Heart left ventricle (tissue), 16 donors: ENCODE measurements at regions of chr2 and their contacts with region 1.

Region 1: DNA sequence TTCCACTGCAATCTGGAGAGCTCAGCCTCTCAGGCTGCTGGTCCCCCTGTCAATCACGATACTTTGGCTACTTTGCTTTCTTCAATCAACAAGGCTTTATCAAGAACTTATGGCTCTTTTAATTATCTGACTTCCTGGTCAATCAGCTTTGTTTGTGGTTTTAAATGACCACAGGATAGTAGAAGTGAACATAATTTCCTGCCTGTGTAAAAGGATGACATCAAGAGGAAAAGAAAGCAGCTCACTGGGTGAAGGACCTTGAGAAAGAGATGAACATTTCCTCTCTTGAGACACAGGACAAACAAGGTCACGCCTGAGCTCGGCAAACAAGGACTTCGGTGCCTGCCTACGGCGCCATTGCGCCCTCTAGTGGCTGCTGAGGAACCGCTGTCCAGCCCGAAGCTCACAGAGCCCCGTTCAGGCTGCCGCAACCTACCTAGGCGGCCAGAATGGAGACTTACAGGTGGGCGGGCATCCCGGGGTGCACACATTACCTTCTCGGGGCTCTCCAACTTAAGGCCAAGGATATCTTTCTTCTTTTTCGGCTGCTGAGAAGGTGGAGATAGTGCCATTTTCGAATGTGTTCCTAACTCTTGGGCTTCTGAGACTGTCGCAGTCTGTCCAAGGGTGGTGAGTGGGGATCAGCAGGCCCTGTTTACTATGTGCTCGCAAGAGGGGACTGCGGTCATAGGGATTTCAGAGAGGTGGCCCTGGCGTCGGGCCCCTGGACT is 54.0 kb downstream of the IL1RL2 start:
- DNase-seq: peak; percentile 91 to 95 (median 92)
- ATAC-seq: peak; percentile 89 to 96 (median 94)
- H3K4me3 ChIP-seq: peak overlapping the region in 6 of 12 donors; percentile 5 to 33 (median 16)
- H3K27ac ChIP-seq: peak overlapping the region; percentile 58 to 88 (median 79)
- H3K4me1 ChIP-seq: peaks cover 0 to 29% (median 11%) of the 10 kb centered on the region in 12 donors
- H3K27me3 ChIP-seq: peaks cover 0 to 2% (median 0%) of the 10 kb centered on the region in 9 donors
- CTCF ChIP-seq: peak; percentile 97 to 100 (median 99)
- POLR2A ChIP-seq: peak in 1 of 2 donors; percentile 23

Region 2: DNA sequence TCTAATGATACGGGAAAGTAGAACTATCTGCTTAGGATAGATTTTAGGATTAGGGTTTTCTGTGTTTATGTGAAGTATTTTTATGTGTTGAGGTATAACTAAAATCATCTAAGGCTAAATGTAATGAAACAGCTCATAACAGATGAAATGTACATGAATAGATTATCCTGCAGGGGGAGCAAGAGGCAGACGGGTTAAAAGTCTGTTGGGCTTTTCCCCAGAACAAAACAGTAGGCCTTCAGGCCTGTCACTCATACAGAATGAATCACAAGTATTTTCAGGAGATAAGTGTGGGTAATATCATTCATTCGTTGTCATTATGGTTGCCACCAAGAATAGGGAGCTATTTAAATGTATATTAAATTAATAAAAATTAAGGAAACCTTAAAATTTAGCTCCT is 356.9 kb before region 1 on chr2:
- intact Hi-C with region 1: loop called in 7 of 10 experiments (anchors 5 to 10 kb)
- DNase-seq: no peak
- ATAC-seq: peak in 3 of 4 donors; percentile 65 to 79 (median 77)
- H3K4me3 ChIP-seq: no peak overlapping the region
- H3K27ac ChIP-seq: peak overlapping the region in 1 of 12 donors; percentile 25
- H3K4me1 ChIP-seq: peaks cover 0 to 35% (median 17%) of the 10 kb centered on the region in 12 donors
- H3K27me3 ChIP-seq: no peaks in the 10 kb centered on the region
- CTCF ChIP-seq: peak; percentile 33 to 68 (median 54)
- POLR2A ChIP-seq: no peak

Region 3: DNA sequence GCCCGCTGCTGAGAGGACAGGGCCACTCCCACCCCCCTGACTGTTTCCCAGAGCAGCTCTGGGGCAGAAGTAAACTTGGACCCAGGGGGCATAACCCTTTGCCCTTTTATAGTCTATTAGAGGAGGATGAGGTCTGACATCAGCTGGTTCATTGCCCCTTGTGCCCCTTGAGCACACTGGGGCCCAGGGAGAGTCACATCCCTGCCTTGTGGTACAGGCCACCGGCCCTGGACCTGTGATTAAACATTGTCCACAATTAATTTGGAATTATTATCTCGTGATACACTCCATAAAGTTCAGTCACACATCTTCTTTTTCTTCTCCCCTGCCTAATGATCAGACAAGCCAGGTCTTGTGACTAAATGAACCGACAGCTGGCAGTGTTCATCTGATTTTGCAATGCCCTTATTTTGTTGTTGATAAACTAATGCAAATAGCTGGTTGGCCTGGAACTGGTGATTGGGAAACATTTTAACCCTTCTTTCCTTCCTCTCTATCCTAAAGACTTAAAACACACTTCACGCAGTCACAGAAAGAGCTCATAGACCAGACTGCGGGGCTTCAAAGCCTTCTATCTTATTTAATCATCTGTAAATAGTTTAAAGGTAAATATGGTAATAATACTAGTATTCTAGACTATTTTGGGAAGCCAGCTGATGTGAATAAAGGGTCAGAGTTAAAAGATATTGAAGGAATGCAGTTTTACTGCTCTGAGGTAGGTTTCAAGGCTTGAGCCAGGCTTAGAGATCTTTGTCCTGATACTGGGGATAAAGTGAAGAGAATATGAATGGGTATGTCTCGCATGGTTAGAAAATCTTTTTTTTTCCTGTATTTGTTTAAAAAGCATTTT is 84.9 kb before region 1 on chr2:
- intact Hi-C with region 1: no loop called
- DNase-seq: no peak
- ATAC-seq: peak in 2 of 4 donors; percentile 16 to 39
- H3K4me3 ChIP-seq: no peak overlapping the region
- H3K27ac ChIP-seq: peak overlapping the region in 3 of 12 donors; percentile 53 to 68 (median 62)
- H3K4me1 ChIP-seq: peaks cover 0 to 28% (median 4%) of the 10 kb centered on the region in 12 donors
- H3K27me3 ChIP-seq: no peaks in the 10 kb centered on the region
- CTCF ChIP-seq: no peak
- POLR2A ChIP-seq: no peak

Region 4: DNA sequence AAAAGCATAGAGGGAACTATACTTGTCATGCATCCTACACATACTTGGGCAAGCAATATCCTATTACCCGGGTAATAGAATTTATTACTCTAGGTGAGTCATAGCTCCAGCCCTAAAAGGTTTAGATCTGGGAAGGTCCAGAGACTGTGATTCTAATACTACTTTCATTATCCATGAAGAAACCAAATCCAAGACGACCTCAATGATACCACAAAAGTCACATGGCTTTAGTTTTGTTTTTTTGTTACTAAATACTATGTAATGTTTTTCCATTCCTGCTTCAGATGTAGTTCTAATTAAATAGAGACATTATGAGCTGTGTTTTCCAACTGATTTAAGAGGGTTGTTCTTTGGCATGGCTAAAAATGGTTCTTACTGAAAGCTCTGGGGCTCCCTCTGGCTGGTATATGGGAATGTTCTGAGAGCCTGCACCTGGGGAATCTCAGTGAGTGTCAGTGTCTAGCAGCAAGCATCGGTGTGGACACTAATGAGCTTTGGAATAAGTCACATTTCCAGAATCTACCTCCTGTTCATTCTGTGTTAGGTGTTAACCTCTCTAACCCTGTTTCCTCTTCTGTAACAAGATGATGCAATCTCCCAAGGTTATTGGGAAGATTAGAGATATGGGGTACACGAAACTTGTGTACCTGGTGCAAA is 74.5 kb before region 1 on chr2:
- intact Hi-C with region 1: loop called in 2 of 10 experiments (anchors 5 kb)
- DNase-seq: no peak
- ATAC-seq: peak; percentile 47 to 91 (median 81)
- H3K4me3 ChIP-seq: no peak overlapping the region
- H3K27ac ChIP-seq: no peak overlapping the region
- H3K4me1 ChIP-seq: peaks cover 0 to 13% (median 4%) of the 10 kb centered on the region in 12 donors
- H3K27me3 ChIP-seq: no peaks in the 10 kb centered on the region
- CTCF ChIP-seq: peak; percentile 36 to 79 (median 66)
- POLR2A ChIP-seq: no peak

Region 5: DNA sequence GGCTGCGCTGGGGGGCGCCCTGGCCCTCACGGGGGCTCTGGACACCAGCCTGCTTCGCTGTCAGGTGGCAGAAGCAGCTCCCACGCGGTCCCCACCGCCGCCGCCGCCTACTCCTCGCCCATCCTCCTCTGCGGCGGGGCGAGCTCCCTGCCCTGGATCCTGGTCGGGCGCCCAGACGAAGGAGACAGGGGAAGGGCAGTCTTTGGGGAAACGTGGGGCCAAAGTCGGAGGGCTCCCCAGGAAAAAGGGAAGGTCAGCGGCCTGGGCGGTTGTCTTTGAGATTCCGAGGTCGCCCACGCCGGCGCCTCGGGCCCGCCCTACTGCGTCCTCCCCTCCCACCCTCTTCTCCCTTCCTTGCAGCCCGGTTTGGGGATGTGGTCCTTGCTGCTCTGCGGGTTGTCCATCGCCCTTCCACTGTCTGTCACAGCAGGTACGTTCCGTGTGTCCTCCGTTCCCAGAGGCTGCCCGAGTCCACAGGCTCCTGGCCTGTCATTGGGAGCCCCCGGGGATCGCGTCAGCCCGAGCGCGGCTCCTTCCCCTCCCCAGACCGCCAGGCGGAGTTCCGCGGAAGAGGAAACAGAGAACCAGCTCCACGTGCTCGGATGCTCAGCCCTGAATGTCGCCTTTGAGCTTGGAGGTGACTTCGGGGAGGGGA is 53.2 kb before region 1 on chr2:
- intact Hi-C with region 1: loop called in 7 of 10 experiments (anchors 2 to 5 kb)
- DNase-seq: peak; percentile 61 to 83 (median 62)
- ATAC-seq: peak; percentile 62 to 92 (median 86)
- H3K4me3 ChIP-seq: peak overlapping the region; percentile 22 to 64 (median 55)
- H3K27ac ChIP-seq: peak overlapping the region in 9 of 12 donors; percentile 23 to 70 (median 54)
- H3K4me1 ChIP-seq: peaks cover 0 to 24% (median 5%) of the 10 kb centered on the region in 12 donors
- H3K27me3 ChIP-seq: peaks cover 0 to 2% (median 0%) of the 10 kb centered on the region in 9 donors
- CTCF ChIP-seq: peak in 9 of 12 donors; percentile 21 to 53 (median 27)
- POLR2A ChIP-seq: peak in 1 of 2 donors; percentile 16

Region 6: GRCh38 chr2:102336502-102336945 is 95.7 kb after region 1 on chr2:
- intact Hi-C with region 1: loop called in 1 of 10 experiments (anchors 10 kb)
- DNase-seq: peak in 1 of 5 donors; percentile 34
- ATAC-seq: peak in 3 of 4 donors; percentile 72 to 86 (median 75)
- H3K4me3 ChIP-seq: peak overlapping the region in 6 of 12 donors; percentile 1 to 34 (median 28)
- H3K27ac ChIP-seq: peak overlapping the region in 11 of 12 donors; percentile 2 to 75 (median 33)
- H3K4me1 ChIP-seq: peaks cover 0 to 25% (median 9%) of the 10 kb centered on the region in 12 donors
- H3K27me3 ChIP-seq: no peaks in the 10 kb centered on the region
- CTCF ChIP-seq: no peak
- POLR2A ChIP-seq: no peak